ENCODE measurements at regions of chr5 and their contacts with region 1.

Region 1: DNA sequence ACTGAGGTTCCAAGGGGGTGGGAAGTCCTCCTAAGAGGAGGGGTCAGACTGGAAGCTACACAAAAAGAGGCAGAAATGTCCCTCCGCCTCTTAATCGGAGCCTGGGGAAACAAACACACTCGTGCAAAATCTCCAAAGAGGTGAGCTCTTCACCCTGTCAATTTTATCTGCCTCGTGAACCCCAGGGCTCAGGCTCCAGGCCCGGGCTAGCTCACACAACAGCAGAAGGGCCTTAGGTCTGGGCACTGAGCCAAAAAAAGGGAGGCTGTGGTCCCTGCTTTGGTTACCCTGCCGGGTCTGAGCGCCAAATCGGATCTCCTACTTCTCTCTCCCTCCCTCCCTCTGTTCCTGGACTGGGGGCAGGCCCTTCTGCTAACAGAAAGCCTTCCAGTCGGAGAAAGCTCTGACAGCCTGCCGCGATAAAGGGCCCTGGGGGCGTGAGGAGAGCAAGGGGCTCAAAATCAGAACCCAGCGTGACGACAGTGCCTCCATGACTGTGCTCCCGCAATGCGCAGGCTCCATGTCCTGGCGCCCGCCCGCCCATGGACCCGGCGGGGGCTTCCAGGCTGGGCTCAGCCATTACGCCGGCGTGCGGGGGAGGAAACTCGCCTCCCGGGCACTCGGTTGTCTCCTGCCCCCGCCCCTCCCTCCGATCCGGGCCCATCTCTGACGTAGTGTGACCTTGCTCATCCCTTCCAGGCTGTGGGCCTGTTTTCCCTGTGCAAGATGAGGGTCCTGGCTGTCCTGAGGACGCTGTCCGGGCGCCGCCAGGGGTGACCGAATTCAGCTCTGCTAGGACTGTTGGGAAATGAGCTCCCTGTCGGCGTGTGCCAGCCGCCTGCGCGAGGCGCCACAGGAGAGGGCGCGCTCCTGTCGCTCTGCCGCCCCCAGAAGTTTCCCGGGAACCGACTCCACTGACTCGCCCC is 865 bp upstream of the SLC22A4 start:
- DNase-seq: peak; percentile 63 to 93
- H3K4me3 ChIP-seq: peak overlapping the region; percentile 71 to 72
- H3K27ac ChIP-seq: peak overlapping the region; percentile 89 to 99
- H3K4me1 ChIP-seq: peaks cover 3 to 17% of the 10 kb centered on the region in 2 donors
- H3K27me3 ChIP-seq: no peaks in the 10 kb centered on the region
- CTCF ChIP-seq: peak in 2 of 3 experiments; percentile 8 to 39

Region 2: DNA sequence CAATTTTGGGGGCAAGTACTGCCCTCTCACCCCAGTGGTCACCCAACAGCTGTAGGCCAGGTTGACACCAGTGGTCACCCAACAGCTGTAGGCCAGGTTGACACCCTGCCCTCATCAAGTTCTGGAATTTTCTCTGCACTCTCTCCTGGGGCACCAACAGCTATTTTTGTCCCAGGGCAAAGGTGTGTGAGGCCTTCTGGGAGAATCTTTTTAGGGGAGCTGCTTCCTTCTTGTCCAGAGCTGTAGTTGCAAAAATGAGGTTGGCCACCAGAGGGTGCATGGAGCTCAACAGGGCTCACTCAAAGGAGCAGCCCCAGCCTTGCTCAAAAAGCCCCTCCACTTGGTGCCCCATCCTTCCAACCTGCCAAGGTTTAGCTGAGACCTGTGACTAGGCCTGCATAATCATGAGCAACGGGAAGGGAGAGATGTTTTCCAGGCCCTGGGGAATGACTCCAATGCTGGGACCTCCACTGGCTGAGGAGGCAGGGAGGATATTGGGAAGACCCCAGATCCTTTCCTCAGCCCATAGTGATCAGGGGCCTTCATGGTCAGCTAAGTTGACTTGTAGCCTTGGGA is 55.1 kb before region 1 on chr5:
- intact Hi-C with region 1: loop called (anchors 10 kb)
- DNase-seq: peak in 1 of 2 donors; percentile 90
- H3K4me3 ChIP-seq: no peak overlapping the region
- H3K27ac ChIP-seq: no peak overlapping the region
- H3K4me1 ChIP-seq: no peaks in the 10 kb centered on the region
- H3K27me3 ChIP-seq: no peaks in the 10 kb centered on the region
- CTCF ChIP-seq: peak; percentile 74 to 86 (median 80)

Region 3: DNA sequence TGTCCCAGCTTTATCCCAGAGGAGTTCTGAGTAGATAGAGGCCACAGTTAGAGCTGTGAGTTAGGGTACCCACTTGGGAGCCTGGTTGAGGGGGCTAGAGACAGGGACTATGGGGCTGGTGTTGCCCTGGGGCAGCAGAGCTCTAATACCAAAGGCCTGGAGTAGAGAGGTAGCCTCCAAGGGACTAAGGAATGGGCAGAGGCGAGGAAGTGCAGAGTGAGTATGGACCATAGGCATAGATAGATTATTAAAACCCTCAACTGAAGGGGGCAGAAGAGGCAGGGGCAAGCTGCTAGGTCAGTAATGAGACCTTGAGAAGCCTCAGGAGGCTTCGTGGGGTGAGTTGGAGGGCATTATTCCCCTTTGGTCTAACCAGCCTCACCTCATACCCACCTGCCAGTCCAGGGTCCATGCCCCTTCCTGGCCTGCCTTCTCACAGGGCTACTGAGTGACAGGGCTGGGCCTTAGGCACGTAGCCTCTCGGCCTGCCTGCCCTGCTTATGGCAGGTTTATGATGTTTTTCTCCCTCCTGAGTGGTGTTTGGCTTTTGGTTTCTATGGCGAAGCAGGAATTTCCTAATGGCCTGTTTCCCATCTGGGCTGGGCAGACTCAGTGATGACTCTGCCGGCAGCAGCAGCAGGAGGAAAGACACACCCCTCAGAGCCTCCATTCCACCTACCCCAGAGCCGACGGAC is 27.8 kb before region 1 on chr5:
- intact Hi-C with region 1: loop called (anchors 2 kb)
- DNase-seq: peak in 1 of 2 donors; percentile 92
- H3K4me3 ChIP-seq: no peak overlapping the region
- H3K27ac ChIP-seq: peak overlapping the region; percentile 94 to 98
- H3K4me1 ChIP-seq: peaks cover 19 to 47% of the 10 kb centered on the region in 2 donors
- H3K27me3 ChIP-seq: no peaks in the 10 kb centered on the region
- CTCF ChIP-seq: no peak

Region 4: GRCh38 chr5:132369474-132370180 is 76.3 kb after region 1 on chr5 and contains the start of gene SLC22A5:
- intact Hi-C with region 1: loop called (anchors 2 kb)
- DNase-seq: peak in 1 of 2 donors; percentile 82
- H3K4me3 ChIP-seq: peak within 1 kb of the TSS; percentile 75 to 79
- H3K27ac ChIP-seq: peak within 1 kb of the TSS; percentile 84 to 93
- H3K4me1 ChIP-seq: peaks cover 5 to 22% of the 10 kb centered on the region in 2 donors
- H3K27me3 ChIP-seq: no peaks in the 10 kb centered on the region
- CTCF ChIP-seq: no peak
- total RNA-seq, gene SLC22A5: 11.9 TPM

Region 5: DNA sequence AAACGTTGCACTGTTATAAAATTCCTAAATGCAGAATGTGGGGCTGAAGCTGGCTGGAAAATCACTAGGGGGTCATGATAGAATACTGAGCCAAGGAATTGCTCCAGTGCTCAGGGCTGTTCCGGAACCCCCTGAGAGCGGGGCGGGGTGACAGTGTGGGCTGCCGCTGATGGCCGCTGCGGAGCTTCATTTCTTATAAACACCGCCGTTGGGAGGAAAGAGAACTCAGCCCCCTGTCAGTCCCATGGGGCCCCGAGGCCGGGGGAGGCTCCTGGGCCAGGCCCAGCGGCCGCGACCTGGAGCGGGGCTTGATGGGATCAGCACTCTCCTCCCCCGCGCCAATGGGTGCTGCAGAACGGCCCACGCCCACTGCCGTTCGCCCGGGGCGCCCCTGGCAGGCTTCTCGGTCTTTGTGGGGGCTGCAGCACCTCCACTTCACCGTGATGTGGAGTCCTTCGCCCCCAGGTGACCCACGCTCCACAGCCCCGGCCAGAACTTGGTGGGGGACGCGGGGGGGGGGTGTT is 202.4 kb after region 1 on chr5:
- intact Hi-C with region 1: loop called (anchors 2 kb)
- DNase-seq: peak in 1 of 2 donors; percentile 92
- H3K4me3 ChIP-seq: peak overlapping the region; percentile 57 to 88
- H3K27ac ChIP-seq: peak overlapping the region; percentile 92 to 97
- H3K4me1 ChIP-seq: peaks cover 17 to 30% of the 10 kb centered on the region in 2 donors
- H3K27me3 ChIP-seq: no peaks in the 10 kb centered on the region
- CTCF ChIP-seq: no peak